Heart right ventricle (tissue), 16 donors: ENCODE measurements at regions of chr17 and their contacts with region 1.

Region 1: DNA sequence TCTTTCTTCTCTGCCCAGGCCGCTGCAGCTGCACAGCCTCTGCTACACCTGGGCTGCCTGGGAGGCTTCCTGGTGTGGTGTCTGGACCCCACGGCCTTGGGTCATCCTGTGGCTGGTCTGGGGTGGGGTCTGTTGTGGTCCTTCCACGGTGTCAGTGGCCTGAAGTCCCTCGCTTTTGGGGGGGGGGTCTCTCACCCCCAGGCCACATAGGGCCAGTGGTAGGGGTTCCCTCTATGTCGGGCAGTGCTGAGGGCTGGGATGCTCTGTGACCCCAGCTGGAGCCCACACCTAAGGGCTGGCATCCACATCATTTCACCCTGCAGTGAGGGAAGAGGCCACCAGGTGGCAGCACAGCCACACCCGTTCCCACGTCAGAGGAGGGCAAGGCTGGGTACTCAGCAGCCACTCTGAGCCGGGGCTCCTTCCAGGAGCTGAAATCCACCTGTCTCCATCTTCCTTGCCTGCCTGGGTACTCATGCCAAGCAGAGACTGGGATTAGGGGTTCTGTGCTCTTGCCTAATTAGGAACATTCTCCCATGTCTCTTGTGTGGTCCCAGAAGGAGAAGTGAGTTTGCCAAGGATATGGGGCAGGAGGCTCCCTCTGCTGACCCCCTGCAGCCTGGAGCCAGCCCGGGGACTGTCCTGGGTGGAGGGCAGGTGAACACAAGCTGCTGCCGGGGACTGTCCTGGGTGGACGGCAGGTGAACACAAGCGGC is 13.0 kb downstream of the ENGASE start:
- DNase-seq: peak; percentile 57 to 77
- ATAC-seq: peak; percentile 41 to 74 (median 70)
- H3K4me3 ChIP-seq: no peak overlapping the region
- H3K27ac ChIP-seq: no peak overlapping the region
- H3K4me1 ChIP-seq: peaks cover 0 to 26% (median 10%) of the 10 kb centered on the region in 9 donors
- H3K27me3 ChIP-seq: peaks cover 0 to 21% (median 8%) of the 10 kb centered on the region in 7 donors
- CTCF ChIP-seq: peak; percentile 89 to 96 (median 92)

Region 2: GRCh38 chr17:79009397-79010308 is 77.9 kb before region 1 on chr17 and contains the start of gene CANT1:
- intact Hi-C with region 1: loop called in 1 of 10 experiments (anchors 10 kb)
- DNase-seq: peak; percentile 81 to 89
- ATAC-seq: peak; percentile 94 to 98 (median 96)
- H3K4me3 ChIP-seq: peak within 1 kb of the TSS; percentile 65 to 92 (median 74)
- H3K27ac ChIP-seq: peak within 1 kb of the TSS; percentile 79 to 96 (median 92)
- H3K4me1 ChIP-seq: peaks cover 8 to 49% (median 42%) of the 10 kb centered on the region in 9 donors
- H3K27me3 ChIP-seq: no peaks in the 10 kb centered on the region
- CTCF ChIP-seq: no peak
- total RNA-seq, gene CANT1: 19.9 to 33.4 (median 24.4) TPM

Region 3: GRCh38 chr17:79036596-79036995 is 51.0 kb before region 1 on chr17:
- intact Hi-C with region 1: loop called in 1 of 10 experiments (anchors 10 kb)
- DNase-seq: no peak
- ATAC-seq: peak in 3 of 8 donors; percentile 3 to 39 (median 32)
- H3K4me3 ChIP-seq: no peak overlapping the region
- H3K27ac ChIP-seq: peak overlapping the region in 1 of 10 donors; percentile 70
- H3K4me1 ChIP-seq: peaks cover 5 to 66% (median 35%) of the 10 kb centered on the region in 9 donors
- H3K27me3 ChIP-seq: peaks cover 0 to 5% (median 0%) of the 10 kb centered on the region in 7 donors
- CTCF ChIP-seq: no peak

Region 4: GRCh38 chr17:79707931-79708891 is 620.6 kb after region 1 on chr17:
- intact Hi-C with region 1: loop called in 4 of 10 experiments (anchors 10 kb)
- DNase-seq: peak; percentile 30 to 44
- ATAC-seq: peak; percentile 38 to 72 (median 50)
- H3K4me3 ChIP-seq: peak overlapping the region in 2 of 10 donors; percentile 12 to 27
- H3K27ac ChIP-seq: no peak overlapping the region
- H3K4me1 ChIP-seq: peaks cover 0 to 5% (median 0%) of the 10 kb centered on the region in 9 donors
- H3K27me3 ChIP-seq: peaks cover 0 to 52% (median 26%) of the 10 kb centered on the region in 7 donors
- CTCF ChIP-seq: peak; percentile 69 to 84 (median 81)

Region 5: GRCh38 chr17:79715098-79715942 is 627.7 kb after region 1 on chr17:
- intact Hi-C with region 1: loop called in 1 of 10 experiments (anchors 10 kb)
- DNase-seq: no peak
- ATAC-seq: no peak
- H3K4me3 ChIP-seq: no peak overlapping the region
- H3K27ac ChIP-seq: no peak overlapping the region
- H3K4me1 ChIP-seq: no peaks in the 10 kb centered on the region
- H3K27me3 ChIP-seq: peaks cover 0 to 55% (median 20%) of the 10 kb centered on the region in 7 donors
- CTCF ChIP-seq: no peak